ENCODE measurements at regions of chr6 and their contacts with region 1.

Region 1: GRCh38 chr6:154868143-154868594 is 126.9 kb upstream of the TIAM2 start:
- DNase-seq: peak; percentile 52 to 71 (median 69)
- H3K4me3 ChIP-seq: no peak overlapping the region
- H3K27ac ChIP-seq: no peak overlapping the region
- H3K4me1 ChIP-seq: no peaks in the 10 kb centered on the region
- H3K27me3 ChIP-seq: no peaks in the 10 kb centered on the region

Region 2: DNA sequence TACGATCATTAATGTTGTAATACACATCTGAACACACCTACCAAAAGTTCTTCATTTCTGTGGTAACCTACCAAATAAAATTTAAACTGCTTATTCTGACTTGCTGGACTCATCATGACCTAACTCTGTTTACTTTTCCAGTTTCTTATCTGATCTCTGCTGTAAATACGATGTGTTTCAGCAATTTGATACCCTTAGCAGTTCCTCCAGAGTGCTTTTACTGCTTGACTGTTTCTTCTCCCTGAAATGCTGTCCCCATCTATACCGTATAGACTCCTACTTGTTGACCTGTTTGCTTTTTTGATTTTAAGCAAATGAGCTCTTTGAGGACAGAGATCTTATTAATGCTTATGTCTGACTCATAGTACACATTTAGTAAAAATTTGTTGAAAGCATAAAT is 15.5 kb before region 1 on chr6:
- CTCF ChIA-PET with region 1: interaction called, 17 read pairs
- POLR2A ChIA-PET with region 1: no interaction called
- DNase-seq: no peak
- H3K4me3 ChIP-seq: no peak overlapping the region
- H3K27ac ChIP-seq: no peak overlapping the region
- H3K4me1 ChIP-seq: no peaks in the 10 kb centered on the region
- H3K27me3 ChIP-seq: no peaks in the 10 kb centered on the region

Measured in common myeloid progenitor, CD34-positive (primary cell).